Activated CD8-positive, alpha-beta T cell treated with anti-CD3 and anti-CD28 coated beads, Interleukin-2, amount 10 ng/mL, durations not matched to agents 7 days and 5 days (primary cell): ENCODE measurements at regions of chr20 and their contacts with region 1.

Region 1: GRCh38 chr20:35954200-35954906 is at the start of gene SCAND1:
- DNase-seq: peak; percentile 98
- ATAC-seq: peak; percentile 89
- H3K4me3 Mint-ChIP-seq: peak within 1 kb of the TSS; percentile 99
- H3K27ac Mint-ChIP-seq: peak within 1 kb of the TSS; percentile 100
- H3K4me1 Mint-ChIP-seq: peaks cover 24% of the 10 kb centered on the region
- H3K27me3 Mint-ChIP-seq: no peaks in the 10 kb centered on the region
- total RNA-seq, gene SCAND1: 63.2 to 64.7 TPM

Region 2: GRCh38 chr20:35619196-35620095 is 334.9 kb before region 1 on chr20:
- CTCF ChIA-PET with region 1: interaction called, 10 read pairs
- POLR2A ChIA-PET with region 1: interaction called, 9 read pairs
- DNase-seq: peak; percentile 83
- ATAC-seq: peak; percentile 41
- H3K4me3 Mint-ChIP-seq: peak overlapping the region; percentile 84
- H3K27ac Mint-ChIP-seq: peak overlapping the region; percentile 81
- H3K4me1 Mint-ChIP-seq: peaks cover 37% of the 10 kb centered on the region
- H3K27me3 Mint-ChIP-seq: peaks cover 1% of the 10 kb centered on the region

Region 3: DNA sequence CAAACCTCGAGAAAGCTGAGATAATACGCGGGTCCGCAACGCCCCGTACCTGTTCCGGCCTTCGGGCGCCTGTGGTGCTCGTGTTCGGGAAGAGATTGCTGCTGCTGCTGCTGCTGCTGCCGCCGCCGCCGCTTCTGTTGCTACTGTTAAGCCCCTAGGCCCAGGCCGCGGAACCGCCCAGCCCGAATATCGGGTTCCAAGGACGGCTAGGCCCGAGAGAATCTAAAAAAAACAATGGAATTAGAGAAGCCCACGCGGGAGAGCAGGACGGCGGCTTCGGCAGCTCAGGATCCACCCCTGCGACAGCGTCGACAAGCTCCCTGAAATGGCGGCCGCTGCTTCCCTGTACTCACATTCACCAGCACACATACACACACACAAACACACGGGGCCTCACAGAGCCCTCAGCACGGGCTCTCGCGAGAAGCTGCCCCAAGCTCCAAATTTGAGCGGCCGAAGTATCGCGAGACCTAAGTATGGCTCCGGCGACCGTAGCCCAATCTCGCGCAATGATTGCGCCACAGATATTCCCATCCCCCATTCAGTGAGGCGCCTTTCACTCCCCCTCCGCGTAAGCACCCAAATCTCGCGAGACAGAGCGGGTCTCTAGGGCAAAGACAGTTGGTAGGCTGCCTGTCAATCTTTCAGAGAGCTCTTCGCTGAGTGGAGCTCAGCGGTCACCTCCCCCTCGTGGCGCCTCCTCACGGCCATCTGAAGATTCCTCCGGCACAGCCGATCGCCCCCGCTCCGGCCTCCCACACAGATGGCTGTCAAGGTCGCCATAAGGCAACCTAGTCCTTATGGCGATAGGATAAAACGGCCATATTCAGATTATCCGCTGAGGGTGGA is 212.2 kb before region 1 on chr20 and contains the start of gene RBM39:
- CTCF ChIA-PET with region 1: interaction called, 42 read pairs
- POLR2A ChIA-PET with region 1: interaction called, 68 read pairs
- DNase-seq: peak; percentile 100
- ATAC-seq: peak; percentile 89
- H3K4me3 Mint-ChIP-seq: peak within 1 kb of the TSS; percentile 96
- H3K27ac Mint-ChIP-seq: peak within 1 kb of the TSS; percentile 100
- H3K4me1 Mint-ChIP-seq: peaks cover 39% of the 10 kb centered on the region
- H3K27me3 Mint-ChIP-seq: no peaks in the 10 kb centered on the region
- total RNA-seq, gene RBM39: 333 to 358 TPM

Region 4: DNA sequence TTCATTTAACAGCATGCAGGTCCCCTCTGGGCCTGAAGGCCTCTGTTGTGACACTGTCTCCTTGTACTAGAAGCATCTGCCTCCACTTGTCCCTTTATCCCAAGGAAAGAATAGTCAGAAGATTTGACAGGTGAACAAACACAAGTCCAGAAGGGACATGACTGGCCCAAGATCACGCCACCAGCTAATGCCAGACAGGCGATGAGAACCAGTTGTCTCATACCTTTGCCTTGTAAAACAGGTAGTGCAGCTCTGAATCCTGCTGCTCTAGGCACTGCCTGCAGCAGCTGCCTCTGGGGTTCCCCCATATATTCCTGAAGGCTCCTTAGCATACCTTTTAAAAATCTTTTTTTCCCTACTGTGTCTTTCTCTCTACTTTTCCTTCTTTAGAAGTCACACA is 25.1 kb before region 1 on chr20:
- CTCF ChIA-PET with region 1: interaction called, 12 read pairs
- POLR2A ChIA-PET with region 1: interaction called, 3 read pairs
- DNase-seq: no peak
- ATAC-seq: no peak
- H3K4me3 Mint-ChIP-seq: no peak overlapping the region
- H3K27ac Mint-ChIP-seq: no peak overlapping the region
- H3K4me1 Mint-ChIP-seq: peaks cover 9% of the 10 kb centered on the region
- H3K27me3 Mint-ChIP-seq: no peaks in the 10 kb centered on the region

Region 5: GRCh38 chr20:35978041-35978513 is 23.7 kb after region 1 on chr20:
- CTCF ChIA-PET with region 1: interaction called, 16 read pairs
- POLR2A ChIA-PET with region 1: no interaction called
- DNase-seq: no peak
- ATAC-seq: no peak
- H3K4me3 Mint-ChIP-seq: no peak overlapping the region
- H3K27ac Mint-ChIP-seq: no peak overlapping the region
- H3K4me1 Mint-ChIP-seq: no peaks in the 10 kb centered on the region
- H3K27me3 Mint-ChIP-seq: peaks cover 6% of the 10 kb centered on the region